SK-N-SH (cell line): ENCODE measurements at regions of chr15 and their contacts with region 1.

Region 1: DNA sequence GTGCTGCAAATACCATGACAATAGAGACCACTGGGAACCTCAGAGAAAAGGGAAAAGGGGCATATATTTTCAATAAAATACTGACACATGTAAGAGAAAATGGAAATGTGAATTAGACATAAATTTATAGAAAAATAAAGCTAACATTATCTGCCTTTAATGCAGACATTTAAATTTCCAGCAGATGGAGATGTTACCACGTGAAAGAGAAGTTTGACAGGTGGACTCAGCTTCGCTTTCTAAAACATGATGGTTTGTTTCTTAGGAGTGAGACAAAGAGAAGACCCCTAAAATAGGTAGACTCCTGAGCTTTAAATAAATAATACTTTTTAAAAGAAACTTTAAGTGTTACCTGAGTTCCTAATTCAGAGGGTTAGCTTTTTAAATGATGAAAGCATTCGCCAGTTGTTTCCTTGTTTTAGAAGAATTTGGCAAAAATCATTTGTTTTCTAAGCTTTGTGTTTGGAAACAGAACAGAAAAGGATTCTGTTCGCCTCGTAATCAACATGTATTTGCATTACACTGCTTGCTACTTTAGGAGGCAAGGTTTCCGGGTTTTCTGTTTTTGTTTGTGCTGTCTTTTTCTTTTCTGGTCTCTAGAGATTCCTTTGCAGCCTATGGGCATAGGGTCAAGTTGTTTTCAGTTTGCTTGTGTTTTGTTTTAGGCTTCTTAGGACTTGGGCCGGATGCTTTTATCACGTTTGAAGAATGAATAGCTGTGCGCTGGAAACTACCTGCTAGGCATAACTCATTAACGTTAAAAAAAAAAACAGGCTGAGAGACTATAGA is 271.4 kb downstream of the THSD4 start:
- DNase-seq: peak; percentile 10
- H3K4me3 ChIP-seq: no peak overlapping the region
- H3K27ac ChIP-seq: no peak overlapping the region
- H3K4me1 ChIP-seq: peaks cover 0 to 3% of the 10 kb centered on the region in 2 experiments; a peak in 1 of 4 replicates
- H3K27me3 ChIP-seq: no peaks in the 10 kb centered on the region
- CTCF ChIP-seq: peak; percentile 62
- EP300 ChIP-seq: no peak
- RAD21 ChIP-seq: peak; percentile 80

Region 2: GRCh38 chr15:71271327-71271726 is 115.3 kb before region 1 on chr15:
- CTCF ChIA-PET with region 1: no interaction called
- POLR2A ChIA-PET with region 1: no interaction called
- DNase-seq: no peak
- H3K4me3 ChIP-seq: no peak overlapping the region
- H3K27ac ChIP-seq: peak overlapping the region in 1 of 2 experiments; percentile 71; a peak in 1 of 4 replicates
- H3K4me1 ChIP-seq: peaks cover 4 to 31% of the 10 kb centered on the region in 2 experiments; a peak in 2 of 4 replicates
- H3K27me3 ChIP-seq: no peaks in the 10 kb centered on the region
- CTCF ChIP-seq: no peak
- EP300 ChIP-seq: no peak
- RAD21 ChIP-seq: no peak

Region 3: GRCh38 chr15:71397377-71397776 is 10.7 kb after region 1 on chr15:
- CTCF ChIA-PET with region 1: interaction called, 26 read pairs
- POLR2A ChIA-PET with region 1: interaction called, 3 read pairs
- DNase-seq: no peak
- H3K4me3 ChIP-seq: no peak overlapping the region
- H3K27ac ChIP-seq: no peak overlapping the region
- H3K4me1 ChIP-seq: no peaks in the 10 kb centered on the region; a peak in 1 of 4 replicates
- H3K27me3 ChIP-seq: no peaks in the 10 kb centered on the region
- CTCF ChIP-seq: no peak
- EP300 ChIP-seq: no peak
- RAD21 ChIP-seq: no peak

Region 4: DNA sequence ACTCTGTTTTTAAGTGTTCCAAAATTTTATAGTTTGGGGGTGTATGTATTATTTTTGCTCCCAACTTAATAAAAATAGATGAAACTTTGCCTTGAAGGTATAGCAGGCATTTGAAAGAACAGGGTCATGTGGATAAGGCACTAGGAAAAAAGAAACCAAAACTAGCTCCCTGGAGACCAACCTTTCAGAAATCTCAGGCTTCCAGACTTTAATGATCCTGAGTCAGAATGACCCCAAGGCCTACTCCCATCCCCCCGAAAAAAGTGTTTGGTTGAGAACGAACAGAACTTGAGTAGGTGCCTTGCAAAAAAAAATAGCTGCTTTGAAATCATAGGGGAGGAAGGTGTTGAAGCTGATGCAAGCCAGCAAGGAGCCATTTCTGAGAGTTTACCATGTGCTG is 38.1 kb after region 1 on chr15:
- CTCF ChIA-PET with region 1: interaction called, 11 read pairs
- POLR2A ChIA-PET with region 1: no interaction called
- DNase-seq: no peak
- H3K4me3 ChIP-seq: no peak overlapping the region
- H3K27ac ChIP-seq: no peak overlapping the region
- H3K4me1 ChIP-seq: no peaks in the 10 kb centered on the region
- H3K27me3 ChIP-seq: no peaks in the 10 kb centered on the region
- CTCF ChIP-seq: no peak
- EP300 ChIP-seq: no peak
- RAD21 ChIP-seq: no peak

Region 5: GRCh38 chr15:71435552-71435951 is 48.9 kb after region 1 on chr15:
- CTCF ChIA-PET with region 1: interaction called, 68 read pairs
- POLR2A ChIA-PET with region 1: no interaction called
- DNase-seq: no peak
- H3K4me3 ChIP-seq: no peak overlapping the region
- H3K27ac ChIP-seq: no peak overlapping the region
- H3K4me1 ChIP-seq: peaks cover 3 to 7% of the 10 kb centered on the region in 2 experiments; a peak in 3 of 4 replicates
- H3K27me3 ChIP-seq: no peaks in the 10 kb centered on the region
- CTCF ChIP-seq: no peak
- EP300 ChIP-seq: no peak
- RAD21 ChIP-seq: no peak

Region 6: DNA sequence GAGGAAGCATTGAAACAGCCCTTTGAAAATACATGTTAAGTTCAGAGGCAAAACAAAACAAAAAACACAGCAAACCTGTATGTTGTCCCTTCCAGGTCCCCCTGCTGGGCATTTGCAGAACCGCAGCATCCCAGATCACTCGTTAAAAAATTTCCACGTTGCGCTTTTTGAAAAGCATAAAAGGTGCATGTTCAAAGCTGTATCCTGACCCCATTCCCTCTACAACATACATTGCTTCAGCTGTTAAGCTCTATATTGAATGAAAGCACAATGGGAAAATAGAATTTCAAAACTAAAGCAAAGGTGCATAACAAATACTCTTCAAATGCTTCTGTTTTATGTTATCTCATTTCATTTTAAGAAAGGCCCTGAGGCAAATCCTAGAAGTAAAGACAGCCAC is 56.9 kb after region 1 on chr15:
- CTCF ChIA-PET with region 1: interaction called, 69 read pairs
- POLR2A ChIA-PET with region 1: no interaction called
- DNase-seq: peak; percentile 42
- H3K4me3 ChIP-seq: no peak overlapping the region; a peak in 1 of 4 replicates
- H3K27ac ChIP-seq: no peak overlapping the region
- H3K4me1 ChIP-seq: peaks cover 0 to 27% of the 10 kb centered on the region in 2 experiments; a peak in 3 of 4 replicates
- H3K27me3 ChIP-seq: no peaks in the 10 kb centered on the region
- CTCF ChIP-seq: peak; percentile 94
- EP300 ChIP-seq: no peak
- RAD21 ChIP-seq: peak; percentile 57

Region 7: DNA sequence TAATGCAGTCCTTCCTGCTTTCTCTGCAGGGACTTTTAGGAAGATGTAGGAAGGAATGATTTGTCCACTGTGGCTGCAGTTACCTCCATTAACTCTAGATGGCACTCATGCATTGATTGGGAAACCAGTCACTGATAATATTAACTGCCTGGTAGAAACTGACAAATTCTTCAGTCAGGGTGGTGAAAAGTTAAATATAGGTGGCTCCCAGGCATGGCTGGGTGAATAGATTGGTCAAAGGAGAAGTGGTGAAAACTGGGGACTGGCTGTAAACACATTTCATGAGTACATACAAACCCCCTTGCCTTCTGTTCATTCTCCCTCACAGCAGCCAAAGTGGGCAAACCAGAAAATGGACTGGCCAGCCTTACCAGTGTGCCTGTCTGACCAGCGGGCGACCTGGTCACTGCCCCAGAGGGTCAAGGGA is 62.1 kb after region 1 on chr15:
- CTCF ChIA-PET with region 1: interaction called, 69 read pairs
- POLR2A ChIA-PET with region 1: no interaction called
- DNase-seq: peak; percentile 47
- H3K4me3 ChIP-seq: no peak overlapping the region; a peak in 1 of 4 replicates
- H3K27ac ChIP-seq: no peak overlapping the region; a peak in 1 of 4 replicates
- H3K4me1 ChIP-seq: peaks cover 0 to 27% of the 10 kb centered on the region in 2 experiments; a peak in 3 of 4 replicates
- H3K27me3 ChIP-seq: no peaks in the 10 kb centered on the region
- CTCF ChIP-seq: peak; percentile 91
- EP300 ChIP-seq: no peak
- RAD21 ChIP-seq: peak; percentile 91

Region 8: DNA sequence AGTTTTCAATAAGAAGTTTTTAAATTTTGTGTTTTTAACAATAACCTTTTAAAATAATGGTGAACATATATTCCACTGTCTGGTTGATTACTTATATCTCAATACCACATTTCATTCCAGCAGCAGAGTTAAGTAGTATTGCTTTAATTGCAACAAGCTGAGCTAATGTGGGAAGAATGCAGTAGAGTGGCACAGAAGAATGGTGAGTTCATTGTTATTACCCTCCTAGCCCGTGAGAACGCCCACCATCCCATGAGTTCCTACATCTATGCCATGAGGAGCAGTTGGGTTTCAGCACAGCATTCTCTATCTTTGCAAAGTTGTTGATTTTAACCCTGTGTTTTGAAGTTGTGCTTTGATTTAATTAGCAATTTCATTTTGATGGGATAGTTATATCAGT is 405.9 kb after region 1 on chr15:
- CTCF ChIA-PET with region 1: no interaction called
- POLR2A ChIA-PET with region 1: no interaction called
- DNase-seq: no peak
- H3K4me3 ChIP-seq: no peak overlapping the region
- H3K27ac ChIP-seq: peak overlapping the region in 1 of 2 experiments; percentile 45; a peak in 2 of 4 replicates
- H3K4me1 ChIP-seq: peaks cover 0 to 6% of the 10 kb centered on the region in 2 experiments; a peak in 2 of 4 replicates
- H3K27me3 ChIP-seq: no peaks in the 10 kb centered on the region
- CTCF ChIP-seq: no peak
- EP300 ChIP-seq: no peak
- RAD21 ChIP-seq: no peak